ENCODE measurements at regions of chr14 and their contacts with region 1.

Region 1: DNA sequence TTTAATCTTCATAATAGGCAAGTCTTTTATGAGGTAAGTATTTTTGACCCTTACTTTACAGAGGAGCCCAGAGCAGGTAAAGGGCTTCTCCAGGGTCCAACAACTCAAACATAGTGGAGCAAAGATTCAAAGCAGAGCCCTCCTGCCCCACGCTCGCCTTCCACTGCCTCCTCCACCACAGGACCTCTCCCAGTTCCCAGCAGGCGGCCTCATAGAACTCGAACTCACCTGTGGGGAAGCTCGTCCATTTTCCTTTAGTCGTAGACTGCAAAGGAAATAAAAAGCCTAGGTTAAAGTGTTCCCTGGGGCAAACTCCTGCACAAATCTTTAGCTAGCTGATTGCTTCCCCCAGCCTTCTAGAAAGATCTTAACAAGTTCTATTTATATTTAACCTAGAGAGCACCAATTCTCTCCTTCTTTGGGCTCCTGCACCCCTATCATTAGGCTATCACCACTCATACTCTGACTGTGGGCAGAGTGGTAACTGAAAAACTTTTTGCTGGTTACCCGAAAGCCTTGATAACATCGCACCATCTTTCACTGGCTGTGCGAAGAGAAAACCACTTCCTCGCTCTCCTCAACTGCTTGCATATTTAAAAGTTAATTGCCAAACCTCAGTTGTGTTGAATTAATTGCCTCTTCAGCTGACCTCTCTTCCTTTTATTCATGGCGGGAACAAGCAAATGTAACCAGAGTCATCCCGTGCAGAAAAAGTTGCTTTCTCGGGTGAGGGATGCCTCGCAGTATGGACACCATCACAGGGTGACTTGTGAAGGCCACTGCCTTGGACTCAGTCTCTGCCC is 299.6 kb downstream of the DPF3 start:
- DNase-seq: peak; percentile 63
- H3K4me3 Mint-ChIP-seq: peak overlapping the region; percentile 47
- H3K27ac Mint-ChIP-seq: peak overlapping the region; percentile 61
- H3K4me1 Mint-ChIP-seq: peaks cover 66% of the 10 kb centered on the region
- H3K27me3 Mint-ChIP-seq: peaks cover 4% of the 10 kb centered on the region

Region 2: GRCh38 chr14:72535485-72535884 is 58.8 kb before region 1 on chr14:
- intact Hi-C with region 1: loop called (anchors 1 kb)
- DNase-seq: peak; percentile 14
- H3K4me3 Mint-ChIP-seq: no peak overlapping the region
- H3K27ac Mint-ChIP-seq: peak overlapping the region; percentile 52
- H3K4me1 Mint-ChIP-seq: peaks cover 76% of the 10 kb centered on the region
- H3K27me3 Mint-ChIP-seq: peaks cover 4% of the 10 kb centered on the region

Region 3: DNA sequence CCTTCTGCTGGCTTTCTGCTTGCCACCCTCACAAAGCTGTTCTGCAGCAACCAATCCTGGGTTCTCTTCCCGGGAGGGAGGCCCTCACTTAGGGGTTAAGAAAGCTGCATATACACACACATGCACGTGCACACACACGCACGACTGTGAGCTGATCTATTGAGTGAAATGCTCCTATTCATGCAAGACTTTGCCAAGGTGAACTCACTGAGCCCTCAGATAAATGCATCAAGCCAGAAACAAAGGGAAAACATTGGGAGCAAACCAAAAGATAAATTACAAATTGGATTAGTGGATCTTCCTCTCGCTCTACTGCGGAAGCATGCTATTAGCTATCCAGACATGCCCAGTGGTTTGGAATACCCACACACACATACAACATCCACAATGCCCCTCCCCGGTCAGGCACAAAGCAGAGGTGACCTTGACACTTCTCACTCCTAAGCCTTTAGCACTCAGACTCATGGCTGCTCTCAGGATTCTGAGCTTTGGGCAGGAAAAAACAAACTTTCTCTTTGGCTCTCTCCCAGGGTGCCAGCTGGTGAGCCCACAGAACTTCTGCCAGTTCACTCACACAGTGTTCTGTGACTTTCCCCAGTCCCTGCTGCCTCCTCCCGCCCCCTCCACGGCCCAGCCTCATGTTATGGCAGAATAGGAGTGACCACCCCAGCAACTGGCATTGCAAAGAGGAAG is 20.4 kb before region 1 on chr14:
- intact Hi-C with region 1: no loop called
- DNase-seq: no peak
- H3K4me3 Mint-ChIP-seq: no peak overlapping the region
- H3K27ac Mint-ChIP-seq: no peak overlapping the region
- H3K4me1 Mint-ChIP-seq: peaks cover 10% of the 10 kb centered on the region
- H3K27me3 Mint-ChIP-seq: peaks cover 42% of the 10 kb centered on the region

Region 4: DNA sequence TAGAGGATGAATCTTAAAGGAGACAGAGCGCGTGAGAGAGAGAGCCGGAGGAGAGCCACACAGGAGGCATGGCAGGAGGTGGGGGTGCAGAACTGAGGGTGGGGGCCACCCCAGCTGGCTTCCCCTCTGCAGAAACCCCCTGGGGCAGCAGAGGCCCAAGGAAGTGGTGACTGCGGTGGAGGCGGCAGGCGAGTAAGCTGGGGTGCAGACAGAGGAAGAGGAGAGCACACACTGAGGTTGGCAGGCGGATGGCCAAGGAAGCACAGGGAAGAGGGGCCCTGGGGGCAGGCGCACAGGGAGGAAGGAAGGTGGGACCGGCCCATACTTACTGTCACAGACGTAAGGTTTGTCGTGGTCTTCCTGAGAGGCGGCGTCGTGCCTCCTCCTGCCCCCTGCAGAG is 119.8 kb after region 1 on chr14:
- intact Hi-C with region 1: loop called (anchors 1 kb)
- DNase-seq: peak; percentile 55
- H3K4me3 Mint-ChIP-seq: peak overlapping the region; percentile 40
- H3K27ac Mint-ChIP-seq: peak overlapping the region; percentile 36
- H3K4me1 Mint-ChIP-seq: peaks cover 37% of the 10 kb centered on the region
- H3K27me3 Mint-ChIP-seq: no peaks in the 10 kb centered on the region

Region 5: DNA sequence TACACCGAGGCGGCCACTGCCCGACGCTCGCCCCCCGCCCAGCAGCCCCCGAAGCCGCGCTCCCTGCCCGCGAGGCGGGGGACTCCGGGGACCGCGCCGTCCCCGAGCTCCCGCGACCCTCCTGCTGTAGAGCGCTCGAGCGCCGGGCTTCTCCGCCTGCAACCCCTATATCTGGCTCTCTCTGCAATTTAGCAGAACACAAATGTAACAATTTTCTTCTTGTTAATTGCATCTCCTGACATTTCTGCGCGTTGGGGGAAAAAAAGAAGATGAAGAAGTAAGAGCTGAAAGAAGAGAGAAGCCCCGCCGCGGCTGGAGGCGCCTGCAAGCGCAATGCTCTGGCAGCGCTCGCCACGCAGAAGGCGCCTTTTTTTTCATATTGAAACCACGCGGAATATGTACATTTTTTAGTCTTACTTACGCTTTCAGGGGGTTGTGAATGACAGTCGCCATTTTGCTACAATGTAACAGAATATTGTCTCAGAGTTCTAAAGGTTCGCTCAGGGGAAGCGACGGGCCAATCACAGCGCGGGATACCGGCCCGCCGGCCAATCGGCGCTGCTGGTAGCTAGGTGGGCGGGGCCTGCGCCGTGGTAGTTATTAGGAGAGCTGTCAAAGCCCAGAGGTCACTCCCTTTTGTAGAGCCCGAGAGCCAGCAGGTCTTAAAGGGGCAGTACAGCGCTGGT is 299.5 kb after region 1 on chr14 and contains the start of gene DPF3:
- intact Hi-C with region 1: loop called (anchors 1 kb)
- DNase-seq: peak; percentile 93
- H3K4me3 Mint-ChIP-seq: peak within 1 kb of the TSS; percentile 95
- H3K27ac Mint-ChIP-seq: peak within 1 kb of the TSS; percentile 86
- H3K4me1 Mint-ChIP-seq: peaks cover 29% of the 10 kb centered on the region
- H3K27me3 Mint-ChIP-seq: peaks cover 51% of the 10 kb centered on the region
- total RNA-seq, gene DPF3: 2.8 and 4.3 TPM in 2 replicates

Region 6: GRCh38 chr14:73696466-73697400 is 1102.4 kb after region 1 on chr14:
- intact Hi-C with region 1: no loop called
- DNase-seq: no peak
- H3K4me3 Mint-ChIP-seq: peak overlapping the region; percentile 64
- H3K27ac Mint-ChIP-seq: peak overlapping the region; percentile 78
- H3K4me1 Mint-ChIP-seq: peaks cover 41% of the 10 kb centered on the region
- H3K27me3 Mint-ChIP-seq: no peaks in the 10 kb centered on the region